Activated T-helper 1 cell treated with anti-CD3 and anti-CD28 coated beads, Interleukin-12 subunit alpha, Interleukin-12 subunit beta, Interleukin-2, Interleukin-4 antibody, amounts not matched to agents 30 ng/mL and 10 ng/mL and 1 ng/mL, durations not matched to agents 14 hours and 24 hours and 36 hours (primary cell): ENCODE measurements at regions of chr5 and their contacts with region 1.

Region 1: GRCh38 chr5:148820461-148821395 is 5.7 kb upstream of the ADRB2 start:
- DNase-seq: no peak
- H3K4me3 Mint-ChIP-seq: no peak overlapping the region
- H3K27ac Mint-ChIP-seq: no peak overlapping the region
- H3K4me1 Mint-ChIP-seq: peaks cover 4% of the 10 kb centered on the region
- H3K27me3 Mint-ChIP-seq: peaks cover 51% of the 10 kb centered on the region

Region 2: GRCh38 chr5:148523139-148523538 is 297.6 kb before region 1 on chr5:
- intact Hi-C with region 1: no loop called
- DNase-seq: no peak
- H3K4me3 Mint-ChIP-seq: no peak overlapping the region
- H3K27ac Mint-ChIP-seq: no peak overlapping the region
- H3K4me1 Mint-ChIP-seq: no peaks in the 10 kb centered on the region
- H3K27me3 Mint-ChIP-seq: no peaks in the 10 kb centered on the region

Region 3: GRCh38 chr5:148904440-148904839 is 83.7 kb after region 1 on chr5:
- intact Hi-C with region 1: no loop called
- DNase-seq: no peak
- H3K4me3 Mint-ChIP-seq: no peak overlapping the region
- H3K27ac Mint-ChIP-seq: no peak overlapping the region
- H3K4me1 Mint-ChIP-seq: no peaks in the 10 kb centered on the region
- H3K27me3 Mint-ChIP-seq: peaks cover 6% of the 10 kb centered on the region

Region 4: DNA sequence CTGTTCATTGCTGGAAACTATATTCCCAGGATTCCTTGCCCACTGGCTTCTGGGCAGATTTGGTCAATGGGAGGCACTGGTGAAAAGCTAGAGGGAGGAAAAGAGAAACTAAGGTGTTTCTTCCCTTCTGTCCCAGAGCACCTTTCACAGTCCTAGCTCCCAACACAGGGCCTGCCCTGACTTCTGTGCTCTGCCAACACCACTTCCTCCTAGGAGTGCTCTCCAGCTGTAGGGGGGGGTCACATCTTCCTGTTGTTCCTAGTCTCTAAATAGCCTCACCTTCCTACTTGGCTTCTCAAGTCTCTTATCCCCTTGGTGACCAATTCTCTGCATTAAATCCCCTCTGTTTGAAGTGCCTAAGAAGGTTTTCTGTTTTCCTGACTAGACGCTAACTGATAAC is 121.1 kb after region 1 on chr5:
- intact Hi-C with region 1: no loop called
- DNase-seq: no peak
- H3K4me3 Mint-ChIP-seq: no peak overlapping the region
- H3K27ac Mint-ChIP-seq: no peak overlapping the region
- H3K4me1 Mint-ChIP-seq: no peaks in the 10 kb centered on the region
- H3K27me3 Mint-ChIP-seq: peaks cover 7% of the 10 kb centered on the region

Region 5: GRCh38 chr5:148957591-148958202 is 137.0 kb after region 1 on chr5:
- intact Hi-C with region 1: loop called (anchors 1 kb)
- DNase-seq: no peak
- H3K4me3 Mint-ChIP-seq: no peak overlapping the region
- H3K27ac Mint-ChIP-seq: no peak overlapping the region
- H3K4me1 Mint-ChIP-seq: no peaks in the 10 kb centered on the region
- H3K27me3 Mint-ChIP-seq: peaks cover 7% of the 10 kb centered on the region

Region 6: GRCh38 chr5:148998174-148998797 is 177.6 kb after region 1 on chr5:
- intact Hi-C with region 1: loop called (anchors 5 kb)
- DNase-seq: no peak
- H3K4me3 Mint-ChIP-seq: no peak overlapping the region
- H3K27ac Mint-ChIP-seq: no peak overlapping the region
- H3K4me1 Mint-ChIP-seq: no peaks in the 10 kb centered on the region
- H3K27me3 Mint-ChIP-seq: peaks cover 11% of the 10 kb centered on the region

Region 7: GRCh38 chr5:149392718-149393117 is 572.0 kb after region 1 on chr5:
- intact Hi-C with region 1: no loop called
- DNase-seq: no peak
- H3K4me3 Mint-ChIP-seq: no peak overlapping the region
- H3K27ac Mint-ChIP-seq: no peak overlapping the region
- H3K4me1 Mint-ChIP-seq: no peaks in the 10 kb centered on the region
- H3K27me3 Mint-ChIP-seq: peaks cover 11% of the 10 kb centered on the region